ENCODE measurements at regions of chr12 and their contacts with region 1.

Region 1: GRCh38 chr12:76348079-76348901 is at the start of gene BBS10:
- DNase-seq: peak; percentile 93 to 95 (median 94)
- ATAC-seq: peak; percentile 95 to 99 (median 98)
- H3K4me3 ChIP-seq: peak within 1 kb of the TSS; percentile 57 to 94 (median 78)
- H3K27ac ChIP-seq: peak within 1 kb of the TSS; percentile 82 to 90 (median 84)
- H3K4me1 ChIP-seq: peaks cover 0 to 42% (median 25%) of the 10 kb centered on the region in 12 donors
- H3K27me3 ChIP-seq: no peaks in the 10 kb centered on the region
- CTCF ChIP-seq: peak in 10 of 12 donors; percentile 14 to 67 (median 42)
- POLR2A ChIP-seq: peak in 1 of 2 donors; percentile 49
- total RNA-seq, gene BBS10: 5.7 to 13.4 (median 9.5) TPM

Region 2: DNA sequence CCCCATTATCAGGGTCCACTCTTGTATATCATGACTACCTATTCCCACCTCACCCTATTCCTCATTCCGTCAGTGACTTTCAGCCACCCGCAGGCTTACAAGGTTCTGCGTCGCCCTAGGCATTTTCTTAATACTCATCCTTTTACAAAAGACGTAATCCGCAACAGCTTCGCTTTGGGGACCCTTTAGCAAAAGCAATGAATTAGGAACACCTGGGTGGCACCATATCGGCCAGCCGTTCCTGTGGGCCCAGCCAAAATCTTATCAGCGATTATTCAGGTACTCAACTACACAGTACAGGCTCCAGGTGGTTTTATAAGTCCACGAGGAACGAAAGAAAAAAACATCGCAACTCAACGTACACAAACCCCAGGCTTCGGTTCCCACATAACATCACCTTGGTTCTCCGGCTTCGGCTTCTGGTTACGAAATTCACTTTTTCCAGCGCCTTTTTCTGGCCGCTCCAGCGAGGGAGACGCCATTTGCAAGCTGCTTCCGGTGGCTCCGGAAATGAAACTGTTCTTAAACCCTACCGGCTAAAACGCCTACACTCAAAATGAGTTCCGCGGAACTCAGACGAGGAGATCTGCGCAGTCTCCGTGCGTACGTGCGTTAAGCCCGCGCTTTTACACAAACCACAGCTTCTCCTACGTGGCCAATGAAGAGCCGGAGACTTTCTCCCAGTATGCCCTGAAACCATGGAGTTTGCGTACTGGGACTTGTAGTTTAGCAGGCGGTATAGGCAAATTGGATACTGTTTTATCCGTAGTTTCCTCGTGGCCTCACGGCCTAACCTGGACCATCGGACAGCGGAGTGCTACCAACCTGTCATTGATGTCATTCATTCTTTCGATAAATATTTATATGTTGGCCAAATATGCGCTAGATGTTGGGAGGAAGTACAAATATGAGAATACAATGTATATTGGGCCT is 836.9 kb before region 1 on chr12 and contains the start of gene KRR1:
- intact Hi-C with region 1: loop called in 3 of 10 experiments (anchors 5 to 10 kb)
- DNase-seq: peak; percentile 90 to 95 (median 93)
- ATAC-seq: peak; percentile 99 to 100 (median 100)
- H3K4me3 ChIP-seq: peak within 1 kb of the TSS; percentile 64 to 95 (median 81)
- H3K27ac ChIP-seq: peak within 1 kb of the TSS; percentile 12 to 82 (median 74)
- H3K4me1 ChIP-seq: peaks cover 0 to 40% (median 14%) of the 10 kb centered on the region in 12 donors
- H3K27me3 ChIP-seq: no peaks in the 10 kb centered on the region
- CTCF ChIP-seq: peak in 2 of 12 donors; percentile 5 to 6
- POLR2A ChIP-seq: peak in 1 of 2 donors; percentile 43
- total RNA-seq, gene KRR1: 16.4 to 42.6 (median 31.1) TPM

Region 3: GRCh38 chr12:75933101-75933500 is 415.2 kb before region 1 on chr12:
- intact Hi-C with region 1: loop called in 1 of 10 experiments (anchors 10 kb)
- DNase-seq: no peak
- ATAC-seq: peak in 1 of 4 donors; percentile 66
- H3K4me3 ChIP-seq: no peak overlapping the region
- H3K27ac ChIP-seq: peak overlapping the region in 1 of 12 donors; percentile 53
- H3K4me1 ChIP-seq: peaks cover 4 to 30% (median 15%) of the 10 kb centered on the region in 12 donors
- H3K27me3 ChIP-seq: peaks cover 0 to 26% (median 0%) of the 10 kb centered on the region in 9 donors
- CTCF ChIP-seq: no peak
- POLR2A ChIP-seq: no peak

Region 4: GRCh38 chr12:76055393-76055792 is 292.9 kb before region 1 on chr12:
- intact Hi-C with region 1: loop called in 2 of 10 experiments (anchors 10 kb)
- DNase-seq: no peak
- ATAC-seq: no peak
- H3K4me3 ChIP-seq: no peak overlapping the region
- H3K27ac ChIP-seq: no peak overlapping the region
- H3K4me1 ChIP-seq: no peaks in the 10 kb centered on the region
- H3K27me3 ChIP-seq: no peaks in the 10 kb centered on the region
- CTCF ChIP-seq: no peak
- POLR2A ChIP-seq: no peak

Region 5: GRCh38 chr12:76113800-76114757 is 234.2 kb before region 1 on chr12:
- intact Hi-C with region 1: loop called in 1 of 10 experiments (anchors 10 kb)
- DNase-seq: no peak
- ATAC-seq: peak; percentile 69 to 90 (median 82)
- H3K4me3 ChIP-seq: no peak overlapping the region
- H3K27ac ChIP-seq: peak overlapping the region in 2 of 12 donors; percentile 31 to 57
- H3K4me1 ChIP-seq: peaks cover 0 to 11% (median 3%) of the 10 kb centered on the region in 12 donors
- H3K27me3 ChIP-seq: no peaks in the 10 kb centered on the region
- CTCF ChIP-seq: no peak
- POLR2A ChIP-seq: no peak